Ascending aorta (tissue), 2 donors: ENCODE measurements at regions of chr18 and their contacts with region 1.

Region 1: GRCh38 chr18:48030616-48031480 is 100.4 kb upstream of the SMAD2 start:
- DNase-seq: no peak
- H3K4me3 ChIP-seq: no peak overlapping the region
- H3K27ac ChIP-seq: no peak overlapping the region
- H3K4me1 ChIP-seq: peaks cover 6 to 12% of the 10 kb centered on the region in 2 donors
- H3K27me3 ChIP-seq: no peaks in the 10 kb centered on the region
- CTCF ChIP-seq: peak; percentile 46 to 78 (median 68)

Region 2: DNA sequence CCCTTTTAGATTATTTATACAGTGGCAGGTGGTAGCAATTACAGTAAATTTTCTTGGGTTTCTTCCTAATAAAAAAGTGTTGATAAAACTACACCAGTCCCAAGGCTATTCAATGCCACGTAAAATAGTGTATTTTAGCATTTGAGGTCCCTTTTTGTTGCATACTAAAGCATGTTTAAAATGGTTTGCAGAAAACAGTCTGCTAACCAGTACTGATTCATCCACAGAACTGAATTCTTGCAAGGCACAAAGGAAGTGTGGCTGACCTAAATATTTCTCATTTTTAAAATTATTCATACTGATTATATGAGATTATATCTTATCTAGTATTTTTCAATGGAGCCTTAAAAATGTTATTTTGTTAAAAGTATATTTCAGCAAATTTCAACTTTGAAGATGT is 198.5 kb before region 1 on chr18:
- intact Hi-C with region 1: no loop called
- DNase-seq: no peak
- H3K4me3 ChIP-seq: no peak overlapping the region
- H3K27ac ChIP-seq: no peak overlapping the region
- H3K4me1 ChIP-seq: no peaks in the 10 kb centered on the region
- H3K27me3 ChIP-seq: no peaks in the 10 kb centered on the region
- CTCF ChIP-seq: no peak

Region 3: GRCh38 chr18:48161191-48161910 is 130.5 kb after region 1 on chr18:
- intact Hi-C with region 1: loop called (anchors 5 kb)
- DNase-seq: peak in 1 of 2 donors; percentile 88
- H3K4me3 ChIP-seq: peak overlapping the region; percentile 67 to 93
- H3K27ac ChIP-seq: peak overlapping the region; percentile 86 to 94
- H3K4me1 ChIP-seq: peaks cover 2 to 12% of the 10 kb centered on the region in 2 donors
- H3K27me3 ChIP-seq: no peaks in the 10 kb centered on the region
- CTCF ChIP-seq: no peak

Region 4: GRCh38 chr18:48230467-48231113 is 199.7 kb after region 1 on chr18:
- intact Hi-C with region 1: no loop called
- DNase-seq: no peak
- H3K4me3 ChIP-seq: no peak overlapping the region
- H3K27ac ChIP-seq: no peak overlapping the region
- H3K4me1 ChIP-seq: peaks cover 0 to 3% of the 10 kb centered on the region in 2 donors
- H3K27me3 ChIP-seq: no peaks in the 10 kb centered on the region
- CTCF ChIP-seq: peak; percentile 20 to 37 (median 22)

Region 5: GRCh38 chr18:48336334-48336733 is 305.5 kb after region 1 on chr18:
- intact Hi-C with region 1: loop called (anchors 5 kb)
- DNase-seq: no peak
- H3K4me3 ChIP-seq: no peak overlapping the region
- H3K27ac ChIP-seq: peak overlapping the region in 1 of 2 donors; percentile 59
- H3K4me1 ChIP-seq: peaks cover 0 to 10% of the 10 kb centered on the region in 2 donors
- H3K27me3 ChIP-seq: no peaks in the 10 kb centered on the region
- CTCF ChIP-seq: no peak

Region 6: DNA sequence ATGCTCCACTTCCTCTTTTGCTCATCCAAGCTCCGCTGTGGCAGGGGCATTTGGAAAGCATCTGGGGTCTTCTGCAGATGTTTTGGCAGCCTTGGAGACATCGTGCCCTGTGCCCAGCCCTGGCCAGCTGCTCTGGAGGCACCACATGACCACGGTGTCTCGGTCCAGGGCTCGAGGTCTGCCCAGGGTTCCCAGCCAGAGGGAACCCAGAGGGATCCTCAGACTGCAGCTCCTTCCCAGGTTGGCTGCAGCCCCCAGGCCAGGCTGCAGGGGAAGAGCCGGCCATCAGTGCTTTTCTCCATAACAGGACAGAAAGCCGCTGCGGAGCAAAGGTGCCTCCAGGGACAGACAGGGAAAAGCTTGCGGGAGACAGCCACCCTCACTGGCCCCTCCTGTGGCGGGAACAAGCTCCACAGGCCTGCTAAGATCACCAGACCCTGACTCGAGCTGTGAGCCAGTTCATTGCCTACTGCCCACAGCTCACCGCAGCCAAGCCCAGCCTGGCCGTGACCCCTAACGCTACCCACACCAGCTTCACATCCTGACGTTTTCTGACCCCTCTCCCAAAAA is 845.2 kb after region 1 on chr18:
- intact Hi-C with region 1: no loop called
- DNase-seq: no peak
- H3K4me3 ChIP-seq: no peak overlapping the region
- H3K27ac ChIP-seq: no peak overlapping the region
- H3K4me1 ChIP-seq: peaks cover 12 to 36% of the 10 kb centered on the region in 2 donors
- H3K27me3 ChIP-seq: no peaks in the 10 kb centered on the region
- CTCF ChIP-seq: peak in 2 of 3 experiments; percentile 12 to 34